ENCODE measurements at regions of chr17 and their contacts with region 1.

Region 1: DNA sequence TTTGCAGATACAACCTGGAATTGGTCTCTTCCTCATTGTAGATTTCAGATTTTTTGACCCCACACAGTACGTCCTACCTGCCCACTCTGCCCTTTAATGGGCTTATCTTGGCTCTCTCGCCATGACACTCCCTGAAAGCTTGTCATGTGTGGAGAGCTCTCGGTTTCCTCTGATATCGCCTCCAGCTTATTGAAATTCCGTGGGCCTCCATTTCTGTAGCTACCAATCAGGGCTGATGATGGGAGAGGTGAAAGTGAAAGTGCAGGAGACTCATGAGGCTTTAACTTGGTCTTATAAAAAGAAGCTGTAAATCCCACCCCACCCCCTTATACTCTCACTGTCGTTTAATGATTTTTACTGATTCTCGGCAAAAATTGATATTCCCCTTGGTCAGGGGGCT is 17.7 kb downstream of the HOXB1 start:
- DNase-seq: no peak
- ATAC-seq: peak; percentile 57
- H3K4me3 Mint-ChIP-seq: peak overlapping the region; percentile 85
- H3K27ac Mint-ChIP-seq: peak overlapping the region; percentile 95
- H3K4me1 Mint-ChIP-seq: peaks cover 49% of the 10 kb centered on the region
- H3K27me3 Mint-ChIP-seq: peaks cover 34% of the 10 kb centered on the region

Region 2: GRCh38 chr17:48472411-48473281 is 40.5 kb before region 1 on chr17:
- POLR2A ChIA-PET with region 1: no interaction called
- DNase-seq: no peak
- ATAC-seq: no peak
- H3K4me3 Mint-ChIP-seq: no peak overlapping the region
- H3K27ac Mint-ChIP-seq: no peak overlapping the region
- H3K4me1 Mint-ChIP-seq: peaks cover 2% of the 10 kb centered on the region
- H3K27me3 Mint-ChIP-seq: peaks cover 10% of the 10 kb centered on the region

Region 3: DNA sequence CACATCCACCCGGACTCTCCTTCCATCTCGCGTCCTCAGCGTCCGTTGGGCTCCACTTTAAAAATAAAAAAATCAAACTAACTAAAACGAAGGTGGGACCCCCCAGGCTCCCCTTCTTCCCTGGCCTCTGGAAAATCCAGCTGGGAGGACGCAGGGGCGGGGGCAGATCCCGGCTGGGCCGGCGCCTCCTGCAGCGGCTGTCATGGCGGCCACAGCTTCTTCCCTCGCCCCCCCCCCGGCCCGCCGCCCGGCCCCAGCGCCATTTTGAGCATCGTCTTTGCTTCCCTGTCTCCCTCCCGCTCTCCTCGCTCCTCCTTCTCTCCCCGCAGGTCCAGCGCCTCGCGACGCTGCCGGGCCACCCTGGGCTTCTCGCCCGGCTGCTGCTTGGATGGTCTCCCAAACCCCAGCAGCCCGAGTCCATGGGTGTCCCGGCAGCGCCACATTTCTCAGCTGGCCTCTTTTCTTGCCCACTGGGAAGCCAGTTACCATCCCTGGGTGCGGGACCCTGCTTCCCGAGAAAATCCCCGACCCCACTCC is 28.5 kb after region 1 on chr17:
- POLR2A ChIA-PET with region 1: interaction called, 21 read pairs
- DNase-seq: peak; percentile 70
- ATAC-seq: no peak
- H3K4me3 Mint-ChIP-seq: peak overlapping the region; percentile 96
- H3K27ac Mint-ChIP-seq: peak overlapping the region; percentile 92
- H3K4me1 Mint-ChIP-seq: peaks cover 34% of the 10 kb centered on the region
- H3K27me3 Mint-ChIP-seq: peaks cover 25% of the 10 kb centered on the region

Region 4: GRCh38 chr17:48547808-48548522 is 34.9 kb after region 1 on chr17:
- POLR2A ChIA-PET with region 1: interaction called, 13 read pairs
- DNase-seq: peak; percentile 53
- ATAC-seq: no peak
- H3K4me3 Mint-ChIP-seq: peak overlapping the region; percentile 74
- H3K27ac Mint-ChIP-seq: peak overlapping the region; percentile 84
- H3K4me1 Mint-ChIP-seq: peaks cover 34% of the 10 kb centered on the region
- H3K27me3 Mint-ChIP-seq: peaks cover 11% of the 10 kb centered on the region

Measured in activated naive CD8-positive, alpha-beta T cell treated with anti-CD3 and anti-CD28 coated beads, Interleukin-2, amount 10 ng/mL, durations not matched to agents 7 days and 5 days (primary cell).